ENCODE measurements at regions of chr21 and their contacts with region 1.

Region 1: GRCh38 chr21:29372063-29372802 is 73.5 kb downstream of the BACH1 start:
- DNase-seq: peak; percentile 33 to 91
- H3K4me3 ChIP-seq: no peak overlapping the region
- H3K27ac ChIP-seq: no peak overlapping the region
- H3K4me1 ChIP-seq: no peaks in the 10 kb centered on the region
- H3K27me3 ChIP-seq: no peaks in the 10 kb centered on the region
- CTCF ChIP-seq: peak in 5 of 7 experiments; percentile 42 to 89 (median 70)
- EP300 ChIP-seq: no peak
- POLR2A ChIP-seq: no peak

Region 2: DNA sequence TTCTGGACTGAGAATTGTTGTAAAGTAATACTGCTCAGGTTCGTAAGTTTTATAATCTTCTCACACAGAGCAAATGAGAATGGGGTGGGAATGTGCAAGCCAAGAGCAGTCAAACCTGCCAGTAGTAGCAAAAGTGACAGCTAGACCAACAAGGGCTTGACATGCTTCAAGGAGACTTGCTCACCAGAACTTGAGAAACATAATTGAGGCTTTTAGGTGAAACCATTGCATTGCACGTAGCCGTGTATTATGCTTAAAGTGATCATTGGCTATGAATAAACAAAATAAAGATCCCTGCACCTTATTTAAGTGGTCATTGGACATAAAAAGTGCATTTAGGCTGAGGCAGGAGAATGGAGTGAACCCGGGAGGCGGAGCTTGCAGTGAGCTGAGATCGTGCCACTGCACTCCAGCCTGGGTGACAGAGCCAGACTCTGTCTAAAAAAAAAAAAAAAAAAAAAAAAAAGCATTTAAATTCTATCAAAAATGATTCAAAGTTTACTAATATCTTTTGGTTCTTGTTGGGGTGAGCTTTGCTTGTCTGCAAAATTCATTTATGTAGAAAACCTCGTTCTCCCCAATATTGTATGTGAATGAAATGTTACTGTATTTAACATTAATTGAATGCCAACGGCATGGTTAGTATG is 287.0 kb before region 1 on chr21:
- intact Hi-C with region 1: loop called (anchors 5 kb)
- DNase-seq: no peak
- H3K4me3 ChIP-seq: no peak overlapping the region
- H3K27ac ChIP-seq: no peak overlapping the region
- H3K4me1 ChIP-seq: peaks cover 0 to 16% (median 6%) of the 10 kb centered on the region in 4 donors
- H3K27me3 ChIP-seq: no peaks in the 10 kb centered on the region
- CTCF ChIP-seq: no peak
- EP300 ChIP-seq: no peak
- POLR2A ChIP-seq: no peak

Region 3: DNA sequence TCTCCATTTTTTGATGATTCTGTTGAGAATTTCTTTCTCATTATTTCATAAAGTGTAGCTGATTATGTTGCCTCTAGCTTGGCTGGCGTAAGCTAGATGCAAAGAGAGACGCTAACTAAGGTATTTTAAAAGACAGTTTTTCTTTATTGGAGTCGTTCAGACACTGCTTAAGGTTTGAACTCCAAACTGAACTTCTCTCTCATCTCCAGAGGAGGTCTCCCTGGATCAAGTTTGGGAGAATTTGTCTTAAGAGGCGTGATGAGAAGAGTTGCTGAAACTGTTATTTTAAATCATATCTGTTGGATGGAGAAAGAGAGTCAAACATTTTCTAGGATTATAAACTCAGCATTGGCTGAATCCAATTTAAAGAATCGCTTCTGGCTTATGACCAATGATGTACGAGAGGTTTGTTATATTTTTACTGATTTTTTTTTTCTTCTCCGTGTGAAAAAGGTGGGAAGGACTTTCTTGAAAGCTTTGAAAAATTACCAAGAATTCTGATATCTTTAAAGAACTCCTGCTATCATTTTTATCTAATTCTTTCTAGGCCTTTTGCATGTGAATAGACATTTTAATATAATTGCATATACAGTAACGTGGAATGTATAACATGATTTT is 207.8 kb before region 1 on chr21:
- intact Hi-C with region 1: loop called (anchors 5 kb)
- DNase-seq: peak in 1 of 2 donors; percentile 76
- H3K4me3 ChIP-seq: no peak overlapping the region
- H3K27ac ChIP-seq: peak overlapping the region in 1 of 5 donors; percentile 64
- H3K4me1 ChIP-seq: peaks cover 0 to 16% (median 5%) of the 10 kb centered on the region in 4 donors
- H3K27me3 ChIP-seq: no peaks in the 10 kb centered on the region
- CTCF ChIP-seq: peak in 4 of 7 experiments; percentile 30 to 53 (median 48)
- EP300 ChIP-seq: no peak
- POLR2A ChIP-seq: no peak